ENCODE measurements at regions of chr4 and their contacts with region 1.

Region 1: DNA sequence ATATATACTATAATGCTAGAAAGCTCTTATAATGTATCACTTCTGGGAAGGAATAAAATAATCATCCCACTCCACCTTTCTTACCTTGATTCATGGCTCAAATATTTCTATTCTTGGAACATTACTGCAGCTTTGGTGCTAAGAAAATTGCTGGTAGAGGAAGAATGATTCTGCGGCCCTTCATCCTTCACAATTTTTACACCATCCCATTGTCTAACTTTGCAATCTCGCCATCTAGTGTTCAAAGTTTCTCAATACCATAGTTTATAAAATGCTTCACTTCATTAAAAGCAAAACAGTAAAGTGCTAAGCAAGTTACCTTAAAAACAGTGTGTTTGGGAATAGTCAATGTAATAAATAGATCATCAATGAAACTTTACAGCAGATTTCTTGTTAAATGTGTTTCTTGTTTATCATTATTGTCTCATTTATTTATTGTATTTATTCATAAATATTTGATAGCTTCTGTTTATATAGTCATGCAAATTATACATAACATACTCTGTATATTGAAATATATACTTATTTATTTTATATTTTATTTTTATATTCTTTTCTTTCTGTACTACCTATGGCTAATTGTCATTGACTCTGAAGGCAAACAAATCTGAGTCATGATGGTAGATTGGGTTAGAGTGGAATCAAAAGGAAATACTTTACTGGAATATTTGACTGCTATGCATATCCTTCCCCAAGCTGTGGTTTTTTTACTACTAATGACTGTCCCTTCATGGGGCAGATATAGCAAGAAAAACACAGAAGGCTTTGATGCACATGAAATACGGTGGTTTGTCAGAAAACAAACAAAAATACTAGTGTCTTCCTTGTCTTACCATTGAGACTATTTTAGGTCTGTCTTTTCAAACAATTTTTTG is 390.7 kb downstream of the MAPK10 start:
- DNase-seq: no peak
- ATAC-seq: peak; percentile 78
- H3K4me3 ChIP-seq: no peak overlapping the region
- H3K27ac ChIP-seq: no peak overlapping the region
- H3K4me1 ChIP-seq: no peaks in the 10 kb centered on the region
- H3K27me3 ChIP-seq: no peaks in the 10 kb centered on the region
- CTCF ChIP-seq: peak; percentile 40 to 59 (median 51); a peak in 5 of 6 replicates
- EP300 ChIP-seq: no peak
- POLR2A ChIP-seq: no peak
- RAD21 ChIP-seq: peak; percentile 68

Region 2: DNA sequence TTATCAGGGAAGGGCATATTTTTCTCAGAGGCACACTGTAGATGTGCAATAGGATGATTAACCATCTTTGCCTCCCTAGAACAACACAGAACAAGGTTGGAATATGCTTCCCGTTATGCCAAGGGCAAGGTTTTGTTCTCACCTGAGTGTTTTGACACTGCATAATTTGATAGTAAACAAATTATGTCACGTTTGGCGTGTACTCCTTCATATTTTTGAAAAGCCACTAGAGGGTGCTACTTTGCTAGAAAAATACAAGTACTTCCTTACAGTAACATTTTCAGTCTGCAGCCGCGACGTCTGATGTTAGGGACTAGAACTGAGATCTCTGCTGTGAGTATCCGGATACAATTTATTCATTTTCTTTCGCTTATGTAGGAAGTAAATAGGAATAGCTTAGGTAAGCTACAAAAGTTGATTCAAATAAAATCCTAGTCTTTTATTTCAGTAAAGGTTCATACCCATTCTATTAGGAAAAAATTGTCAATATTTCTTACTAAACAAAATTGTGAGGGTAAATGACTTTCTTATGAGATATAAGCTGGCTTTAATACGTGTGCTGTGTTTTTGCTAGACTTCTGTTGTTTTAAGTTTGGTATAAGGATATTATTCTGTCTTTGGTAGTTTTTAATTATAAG is 821.6 kb before region 1 on chr4:
- CTCF ChIA-PET with region 1: interaction called, 11 read pairs
- POLR2A ChIA-PET with region 1: no interaction called
- RAD21 ChIA-PET with region 1: no interaction called
- SMC1A ChIA-PET with region 1: interaction called, 11 read pairs
- in situ Hi-C with region 1: no loop called
- intact Hi-C with region 1: loop called (anchors 2 kb)
- DNase-seq: peak; percentile 11
- ATAC-seq: peak; percentile 93
- H3K4me3 ChIP-seq: no peak overlapping the region
- H3K27ac ChIP-seq: no peak overlapping the region
- H3K4me1 ChIP-seq: no peaks in the 10 kb centered on the region
- H3K27me3 ChIP-seq: no peaks in the 10 kb centered on the region
- CTCF ChIP-seq: peak; percentile 51 to 67 (median 53); a peak in 5 of 6 replicates
- EP300 ChIP-seq: no peak
- POLR2A ChIP-seq: no peak
- RAD21 ChIP-seq: peak; percentile 63

Region 3: DNA sequence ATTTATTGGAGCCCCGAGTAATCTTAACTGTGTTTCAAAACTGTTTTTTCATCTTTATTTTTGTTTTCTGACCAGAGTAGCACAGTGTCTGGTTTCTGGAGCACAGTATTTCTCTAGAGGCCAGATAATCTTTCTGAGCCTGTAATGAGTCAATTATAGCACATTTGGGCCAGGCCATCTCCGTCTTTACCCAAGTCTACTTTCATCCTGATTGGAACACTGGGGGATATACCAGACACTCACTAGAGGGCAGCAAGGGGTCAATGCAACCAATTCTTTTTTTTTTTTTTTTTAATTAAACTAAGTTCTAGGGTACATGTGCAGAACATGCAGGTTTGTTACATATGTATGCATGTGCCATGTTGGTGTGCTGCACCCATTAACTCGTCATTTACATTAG is 212.2 kb before region 1 on chr4:
- CTCF ChIA-PET with region 1: interaction called, 3 read pairs
- POLR2A ChIA-PET with region 1: no interaction called
- RAD21 ChIA-PET with region 1: no interaction called
- SMC1A ChIA-PET with region 1: interaction called, 6 read pairs
- in situ Hi-C with region 1: loop called (anchors 10 kb)
- intact Hi-C with region 1: loop called (anchors 1 kb)
- DNase-seq: no peak
- ATAC-seq: peak; percentile 79
- H3K4me3 ChIP-seq: no peak overlapping the region
- H3K27ac ChIP-seq: no peak overlapping the region
- H3K4me1 ChIP-seq: no peaks in the 10 kb centered on the region
- H3K27me3 ChIP-seq: no peaks in the 10 kb centered on the region
- CTCF ChIP-seq: peak; percentile 49 to 60 (median 50); a peak in 5 of 6 replicates
- EP300 ChIP-seq: no peak
- POLR2A ChIP-seq: no peak
- RAD21 ChIP-seq: peak; percentile 71

Region 4: DNA sequence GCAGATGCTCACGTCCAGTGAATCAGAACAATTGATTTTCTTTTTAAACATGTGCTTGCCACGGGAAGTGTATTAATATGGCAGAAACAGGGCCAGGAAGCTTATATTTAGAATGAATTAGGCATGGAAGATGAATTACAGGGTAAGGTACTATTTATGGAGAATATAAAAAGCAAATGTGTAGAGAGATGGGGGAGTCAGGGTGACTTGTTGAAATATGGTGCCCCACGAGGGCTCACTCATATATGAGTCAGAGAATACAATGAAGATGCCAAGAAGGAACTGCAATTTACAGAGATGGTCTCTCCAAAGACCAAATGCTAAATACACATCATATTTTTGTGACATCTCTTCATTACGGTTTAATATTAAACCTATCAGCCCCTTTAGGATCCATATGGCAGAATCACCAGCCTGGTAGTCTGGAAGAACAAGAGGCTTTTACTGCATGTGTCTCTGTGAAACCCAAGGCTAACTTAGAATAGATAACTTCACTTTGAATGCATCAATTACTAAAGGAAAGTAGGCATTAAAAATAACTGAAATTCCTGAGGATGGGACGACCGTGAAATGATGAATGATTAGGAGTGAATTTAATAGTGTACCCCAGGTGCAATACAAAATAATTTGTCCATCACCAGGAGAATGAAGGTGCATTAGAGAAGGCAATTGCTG is 109.0 kb before region 1 on chr4:
- CTCF ChIA-PET with region 1: no interaction called
- POLR2A ChIA-PET with region 1: no interaction called
- RAD21 ChIA-PET with region 1: no interaction called
- SMC1A ChIA-PET with region 1: no interaction called
- in situ Hi-C with region 1: no loop called
- intact Hi-C with region 1: no loop called
- DNase-seq: no peak
- ATAC-seq: no peak
- H3K4me3 ChIP-seq: no peak overlapping the region
- H3K27ac ChIP-seq: no peak overlapping the region
- H3K4me1 ChIP-seq: no peaks in the 10 kb centered on the region
- H3K27me3 ChIP-seq: no peaks in the 10 kb centered on the region
- CTCF ChIP-seq: no peak
- EP300 ChIP-seq: no peak
- POLR2A ChIP-seq: no peak
- RAD21 ChIP-seq: no peak

Region 5: GRCh38 chr4:85898236-85898635 is 70.9 kb before region 1 on chr4:
- CTCF ChIA-PET with region 1: no interaction called
- POLR2A ChIA-PET with region 1: no interaction called
- RAD21 ChIA-PET with region 1: no interaction called
- SMC1A ChIA-PET with region 1: no interaction called
- in situ Hi-C with region 1: no loop called
- intact Hi-C with region 1: no loop called
- DNase-seq: no peak
- ATAC-seq: no peak
- H3K4me3 ChIP-seq: no peak overlapping the region
- H3K27ac ChIP-seq: no peak overlapping the region
- H3K4me1 ChIP-seq: no peaks in the 10 kb centered on the region
- H3K27me3 ChIP-seq: no peaks in the 10 kb centered on the region
- CTCF ChIP-seq: no peak
- EP300 ChIP-seq: no peak
- POLR2A ChIP-seq: no peak
- RAD21 ChIP-seq: no peak

Region 6: DNA sequence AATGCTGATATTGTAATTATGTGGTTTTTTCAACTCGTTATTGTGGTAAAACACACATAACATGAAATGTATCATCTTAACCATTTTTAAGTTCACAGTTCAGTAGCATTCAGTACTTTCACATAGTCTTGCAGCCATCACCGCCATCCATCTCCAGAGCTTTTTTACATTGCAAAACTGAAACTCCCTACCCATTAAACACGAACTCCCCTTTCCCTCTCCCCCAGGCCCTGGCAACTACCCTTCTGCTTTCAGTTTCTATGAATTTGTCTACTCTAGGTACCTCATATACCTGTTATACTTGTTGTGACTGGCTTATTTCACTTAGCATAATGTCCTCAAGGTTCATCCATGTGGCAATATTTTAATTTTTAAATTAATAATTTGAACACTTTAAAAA is 10.1 kb after region 1 on chr4:
- CTCF ChIA-PET with region 1: interaction called, 11 read pairs
- POLR2A ChIA-PET with region 1: no interaction called
- RAD21 ChIA-PET with region 1: no interaction called
- SMC1A ChIA-PET with region 1: no interaction called
- in situ Hi-C with region 1: no loop called
- intact Hi-C with region 1: no loop called
- DNase-seq: peak; percentile 30
- ATAC-seq: peak; percentile 92
- H3K4me3 ChIP-seq: no peak overlapping the region
- H3K27ac ChIP-seq: no peak overlapping the region
- H3K4me1 ChIP-seq: no peaks in the 10 kb centered on the region
- H3K27me3 ChIP-seq: no peaks in the 10 kb centered on the region; a peak in 1 of 4 replicates
- CTCF ChIP-seq: no peak
- EP300 ChIP-seq: no peak
- POLR2A ChIP-seq: no peak
- RAD21 ChIP-seq: no peak